Psoas muscle (tissue), 8 donors: ENCODE measurements at regions of chr12 and their contacts with region 1.

Region 1: GRCh38 chr12:66409195-66409871 is 107.0 kb downstream of the HELB start:
- DNase-seq: no peak
- ATAC-seq: peak in 2 of 4 donors; percentile 25 to 50
- H3K4me3 ChIP-seq: no peak overlapping the region
- H3K27ac ChIP-seq: no peak overlapping the region
- H3K4me1 ChIP-seq: no peaks in the 10 kb centered on the region
- H3K27me3 ChIP-seq: no peaks in the 10 kb centered on the region
- CTCF ChIP-seq: peak; percentile 58

Region 2: DNA sequence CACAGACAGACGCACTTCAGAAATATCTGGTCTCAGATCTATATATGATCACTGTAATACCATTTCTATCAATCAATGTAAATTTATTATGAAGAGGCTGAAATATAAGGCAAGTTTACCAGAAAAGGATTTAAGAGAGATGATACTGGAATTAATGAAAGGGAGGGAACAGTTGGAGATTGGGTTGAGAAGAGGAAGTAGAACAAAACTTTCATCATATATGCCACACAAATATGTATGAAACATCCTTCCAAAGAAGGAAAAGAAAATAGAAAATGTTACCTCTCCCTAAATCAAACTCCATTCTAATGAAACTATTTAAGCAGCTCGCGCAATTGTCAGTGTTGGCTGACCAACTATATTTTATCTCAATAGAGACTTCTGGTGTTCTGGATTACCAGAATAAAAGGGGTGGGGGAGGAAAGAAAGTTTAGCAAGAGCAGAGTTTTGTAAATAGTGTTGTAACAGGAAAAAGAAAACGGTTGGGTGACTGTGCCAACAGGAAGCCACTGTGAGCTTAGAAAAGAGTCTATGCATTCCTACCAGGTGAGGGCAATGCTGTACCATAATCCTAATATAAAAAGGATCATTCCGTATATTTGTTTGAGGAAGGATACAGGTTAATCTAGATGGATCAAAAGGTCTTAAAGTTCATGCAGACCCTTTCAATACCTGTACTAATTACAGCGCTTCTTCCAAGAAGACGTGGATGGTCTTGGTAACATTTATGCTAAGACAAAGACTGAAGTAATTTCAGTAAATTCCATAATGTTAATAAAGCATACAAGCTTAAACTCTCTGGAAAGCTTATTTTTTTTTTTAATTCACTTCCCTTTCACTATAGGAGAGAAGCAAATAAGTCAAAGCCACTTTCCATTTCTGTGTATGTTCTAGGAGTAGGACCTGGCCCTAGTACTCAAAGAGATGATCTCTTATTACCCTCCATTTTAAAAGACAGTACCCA is 264.3 kb before region 1 on chr12:
- intact Hi-C with region 1: loop called in 1 of 2 experiments (anchors 10 kb)
- DNase-seq: no peak
- ATAC-seq: peak in 3 of 4 donors; percentile 65 to 86 (median 84)
- H3K4me3 ChIP-seq: no peak overlapping the region
- H3K27ac ChIP-seq: no peak overlapping the region
- H3K4me1 ChIP-seq: no peaks in the 10 kb centered on the region
- H3K27me3 ChIP-seq: no peaks in the 10 kb centered on the region
- CTCF ChIP-seq: peak; percentile 56

Region 3: DNA sequence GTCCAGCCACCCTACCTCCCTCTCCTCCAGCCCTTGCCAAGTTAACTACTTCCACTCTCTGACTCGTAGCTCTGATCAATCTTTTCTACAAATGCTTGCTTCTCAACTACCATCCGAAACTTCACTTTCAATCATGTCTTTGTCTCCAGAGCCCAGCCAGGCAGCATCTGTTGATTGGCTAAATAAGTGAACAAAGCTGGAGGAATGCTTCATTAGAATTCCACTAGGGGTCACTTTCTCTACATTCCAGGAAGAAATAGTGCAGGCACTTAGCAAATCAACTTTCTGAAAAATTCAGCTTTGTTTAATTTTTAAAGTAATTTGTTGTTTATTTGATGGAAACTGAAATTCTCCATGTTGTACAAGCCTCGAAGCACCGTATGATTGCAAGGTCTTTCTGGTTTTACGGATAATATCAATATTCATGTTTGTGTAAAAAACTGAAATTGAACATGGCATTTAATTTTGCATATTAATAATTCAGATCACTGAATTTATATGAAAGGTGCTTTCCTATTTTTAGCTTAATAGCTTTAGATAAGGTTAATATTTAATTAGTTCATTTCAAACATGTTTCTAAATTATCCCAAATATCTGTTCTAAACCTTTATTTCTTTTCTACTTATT is 139.5 kb before region 1 on chr12:
- intact Hi-C with region 1: loop called in 1 of 2 experiments (anchors 1 kb)
- DNase-seq: no peak
- ATAC-seq: no peak
- H3K4me3 ChIP-seq: no peak overlapping the region
- H3K27ac ChIP-seq: no peak overlapping the region
- H3K4me1 ChIP-seq: no peaks in the 10 kb centered on the region
- H3K27me3 ChIP-seq: no peaks in the 10 kb centered on the region
- CTCF ChIP-seq: peak; percentile 53

Region 4: DNA sequence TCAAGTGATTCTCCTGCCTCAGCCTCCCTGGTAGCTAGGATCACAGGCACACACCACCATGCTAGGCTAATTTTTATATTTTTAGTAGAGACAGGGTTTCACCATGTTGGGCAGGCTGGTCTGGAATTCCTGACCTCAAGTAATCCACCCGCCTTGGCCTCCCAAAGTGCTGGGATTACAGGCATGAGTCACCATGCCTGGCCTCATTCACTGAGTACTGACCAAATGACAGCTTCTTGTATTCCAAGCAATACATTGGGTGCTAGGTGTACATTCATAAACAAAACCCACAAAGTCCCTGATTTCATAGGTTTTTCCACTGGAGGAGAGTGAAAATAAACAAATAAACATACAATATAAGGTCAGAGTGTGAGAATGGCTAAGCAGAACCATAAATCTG is 29.3 kb after region 1 on chr12:
- intact Hi-C with region 1: no loop called
- DNase-seq: no peak
- ATAC-seq: no peak
- H3K4me3 ChIP-seq: no peak overlapping the region
- H3K27ac ChIP-seq: no peak overlapping the region
- H3K4me1 ChIP-seq: no peaks in the 10 kb centered on the region
- H3K27me3 ChIP-seq: no peaks in the 10 kb centered on the region
- CTCF ChIP-seq: no peak